Left ventricle myocardium superior (tissue), 1 donor: ENCODE measurements at regions of chr14 and their contacts with region 1.

Region 1: DNA sequence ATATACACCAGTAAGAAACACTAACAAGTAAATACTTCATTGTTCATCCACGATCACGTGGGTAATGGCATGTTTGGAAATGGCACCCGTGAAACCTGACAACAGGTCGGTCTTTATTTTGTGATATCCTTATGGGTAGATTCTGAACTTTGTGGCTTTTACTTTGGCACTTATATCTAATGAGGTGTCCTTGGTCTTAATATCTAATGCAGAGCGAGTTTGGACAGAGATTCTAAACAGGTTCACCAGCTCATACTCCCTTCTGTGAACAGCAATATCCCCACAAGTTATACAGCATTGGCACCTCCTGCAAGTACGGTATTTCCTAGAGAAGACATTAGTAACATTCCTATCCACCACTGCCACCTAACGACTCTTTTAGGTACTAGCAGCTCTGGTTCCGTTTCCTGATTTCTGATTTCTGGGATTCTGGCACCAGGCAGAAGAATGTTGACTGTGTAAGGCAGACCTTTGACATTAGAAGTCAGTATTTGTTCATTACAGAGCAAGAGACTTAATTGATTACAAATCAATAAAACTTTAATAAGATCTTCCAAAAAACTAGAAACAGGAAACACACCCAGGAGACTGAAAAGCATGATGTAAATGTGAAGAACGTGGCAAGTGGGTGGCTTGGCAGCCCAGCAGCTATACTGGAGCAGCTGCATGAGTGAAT is 2.4 kb downstream of the ANG start:
- DNase-seq: no peak
- ATAC-seq: peak; percentile 82

Region 2: GRCh38 chr14:20327005-20327869 is 363.7 kb before region 1 on chr14:
- intact Hi-C with region 1: loop called (anchors 10 kb)
- DNase-seq: no peak
- ATAC-seq: peak; percentile 32